Left ventricle myocardium superior (tissue), 1 donor: ENCODE measurements at regions of chr2 and their contacts with region 1.

Region 1: GRCh38 chr2:147945660-147946059 is 74.9 kb downstream of the ORC4 start:
- DNase-seq: no peak
- ATAC-seq: no peak

Region 2: GRCh38 chr2:147843864-147844696 is 101.6 kb before region 1 on chr2:
- intact Hi-C with region 1: no loop called
- DNase-seq: peak; percentile 96
- ATAC-seq: peak; percentile 96

Region 3: DNA sequence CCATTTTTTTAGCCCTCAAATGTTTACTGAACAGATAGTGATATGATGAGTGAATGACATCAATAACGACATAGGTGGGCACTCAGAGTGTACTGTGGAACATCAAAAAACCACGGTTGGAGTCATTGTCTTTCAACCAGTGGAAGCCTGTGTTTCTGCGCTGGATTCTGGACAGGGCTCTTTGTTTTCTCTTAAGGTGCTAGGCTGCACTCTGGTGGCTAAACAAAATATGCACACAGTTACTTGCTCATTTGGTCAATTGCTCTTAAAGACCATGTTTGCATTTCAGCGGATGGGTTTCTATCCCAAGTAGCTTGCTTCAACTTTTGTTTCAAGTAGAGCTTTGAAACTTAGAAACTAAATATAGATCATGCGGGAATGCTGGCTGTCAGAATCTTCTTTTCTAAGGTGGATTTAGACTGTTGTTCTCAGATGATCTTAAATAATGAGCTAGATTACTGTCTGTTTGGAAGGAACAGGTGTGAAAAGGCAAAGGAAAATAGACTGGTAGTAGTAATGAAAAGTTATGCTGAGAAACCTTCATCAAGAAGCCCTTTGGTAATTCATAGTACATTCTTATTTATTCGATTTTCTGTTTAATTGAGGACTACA is 1044.3 kb after region 1 on chr2:
- intact Hi-C with region 1: loop called (anchors 10 kb)
- DNase-seq: no peak
- ATAC-seq: peak; percentile 86